CD4-positive, alpha-beta memory T cell (primary cell): ENCODE measurements at regions of chr1 and their contacts with region 1.

Region 1: DNA sequence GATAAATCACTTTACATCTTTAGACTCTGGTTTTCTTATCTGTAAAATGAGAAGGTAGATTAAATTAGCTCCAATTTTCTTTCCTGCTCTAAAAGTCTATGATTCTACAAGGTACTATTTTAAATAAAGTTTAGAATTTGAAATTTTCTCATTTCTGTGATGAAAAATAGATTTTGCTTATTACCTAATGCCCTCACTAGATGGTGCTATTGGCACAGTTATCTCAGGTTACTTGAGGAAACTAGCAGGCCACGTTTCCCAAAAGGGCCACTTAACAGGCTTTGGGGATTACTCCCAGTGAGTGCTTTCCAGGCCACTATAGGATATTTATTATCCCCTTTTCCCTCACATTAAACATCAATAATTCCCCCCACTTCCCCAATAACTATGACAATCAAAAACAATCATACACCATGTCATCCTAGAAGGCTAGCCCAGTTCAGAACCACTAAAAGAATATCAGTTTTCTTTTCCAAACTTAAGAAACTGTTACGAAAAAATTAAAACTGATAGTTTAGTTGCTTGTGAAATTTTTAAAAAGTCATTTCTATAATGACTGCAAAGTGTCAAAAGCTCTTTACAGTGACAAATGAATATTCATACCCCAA is 30.6 kb downstream of the OMA1 start:
- DNase-seq: peak; percentile 33 to 60 (median 55)
- H3K4me3 ChIP-seq: no peak overlapping the region
- H3K4me3 Mint-ChIP-seq: no peak overlapping the region
- H3K27ac ChIP-seq: no peak overlapping the region
- H3K27ac Mint-ChIP-seq: peak overlapping the region; percentile 54 to 92 (median 77)
- H3K4me1 ChIP-seq: peaks cover 4% of the 10 kb centered on the region
- H3K4me1 Mint-ChIP-seq: peaks cover 5 to 13% (median 7%) of the 10 kb centered on the region in 4 donors
- H3K27me3 ChIP-seq: no peaks in the 10 kb centered on the region
- H3K27me3 Mint-ChIP-seq: no peaks in the 10 kb centered on the region

Region 2: GRCh38 chr1:58528518-58528917 is 12.6 kb after region 1 on chr1:
- CTCF ChIA-PET with region 1: interaction called, 17 read pairs
- POLR2A ChIA-PET with region 1: no interaction called
- intact Hi-C with region 1: no loop called
- DNase-seq: no peak
- H3K4me3 ChIP-seq: no peak overlapping the region
- H3K4me3 Mint-ChIP-seq: no peak overlapping the region
- H3K27ac ChIP-seq: no peak overlapping the region
- H3K27ac Mint-ChIP-seq: peak overlapping the region in 1 of 7 donors; percentile 21
- H3K4me1 ChIP-seq: no peaks in the 10 kb centered on the region
- H3K4me1 Mint-ChIP-seq: no peaks in the 10 kb centered on the region
- H3K27me3 ChIP-seq: no peaks in the 10 kb centered on the region
- H3K27me3 Mint-ChIP-seq: no peaks in the 10 kb centered on the region

Region 3: GRCh38 chr1:58539553-58539952 is 23.7 kb after region 1 on chr1:
- CTCF ChIA-PET with region 1: interaction called, 121 read pairs
- POLR2A ChIA-PET with region 1: interaction called, 3 read pairs
- intact Hi-C with region 1: no loop called
- DNase-seq: no peak
- H3K4me3 ChIP-seq: no peak overlapping the region
- H3K4me3 Mint-ChIP-seq: no peak overlapping the region
- H3K27ac ChIP-seq: no peak overlapping the region
- H3K27ac Mint-ChIP-seq: no peak overlapping the region
- H3K4me1 ChIP-seq: no peaks in the 10 kb centered on the region
- H3K4me1 Mint-ChIP-seq: peaks cover 2 to 13% (median 8%) of the 10 kb centered on the region in 4 donors
- H3K27me3 ChIP-seq: no peaks in the 10 kb centered on the region
- H3K27me3 Mint-ChIP-seq: no peaks in the 10 kb centered on the region

Region 4: GRCh38 chr1:58652651-58653184 is 136.8 kb after region 1 on chr1:
- CTCF ChIA-PET with region 1: interaction called, 88 read pairs
- POLR2A ChIA-PET with region 1: interaction called, 3 read pairs
- intact Hi-C with region 1: loop called (anchors 1 kb)
- DNase-seq: peak; percentile 43 to 63 (median 60)
- H3K4me3 ChIP-seq: no peak overlapping the region
- H3K4me3 Mint-ChIP-seq: no peak overlapping the region
- H3K27ac ChIP-seq: no peak overlapping the region
- H3K27ac Mint-ChIP-seq: peak overlapping the region in 1 of 7 donors; percentile 32
- H3K4me1 ChIP-seq: peaks cover 14% of the 10 kb centered on the region
- H3K4me1 Mint-ChIP-seq: peaks cover 11 to 29% (median 15%) of the 10 kb centered on the region in 4 donors
- H3K27me3 ChIP-seq: no peaks in the 10 kb centered on the region
- H3K27me3 Mint-ChIP-seq: no peaks in the 10 kb centered on the region

Region 5: DNA sequence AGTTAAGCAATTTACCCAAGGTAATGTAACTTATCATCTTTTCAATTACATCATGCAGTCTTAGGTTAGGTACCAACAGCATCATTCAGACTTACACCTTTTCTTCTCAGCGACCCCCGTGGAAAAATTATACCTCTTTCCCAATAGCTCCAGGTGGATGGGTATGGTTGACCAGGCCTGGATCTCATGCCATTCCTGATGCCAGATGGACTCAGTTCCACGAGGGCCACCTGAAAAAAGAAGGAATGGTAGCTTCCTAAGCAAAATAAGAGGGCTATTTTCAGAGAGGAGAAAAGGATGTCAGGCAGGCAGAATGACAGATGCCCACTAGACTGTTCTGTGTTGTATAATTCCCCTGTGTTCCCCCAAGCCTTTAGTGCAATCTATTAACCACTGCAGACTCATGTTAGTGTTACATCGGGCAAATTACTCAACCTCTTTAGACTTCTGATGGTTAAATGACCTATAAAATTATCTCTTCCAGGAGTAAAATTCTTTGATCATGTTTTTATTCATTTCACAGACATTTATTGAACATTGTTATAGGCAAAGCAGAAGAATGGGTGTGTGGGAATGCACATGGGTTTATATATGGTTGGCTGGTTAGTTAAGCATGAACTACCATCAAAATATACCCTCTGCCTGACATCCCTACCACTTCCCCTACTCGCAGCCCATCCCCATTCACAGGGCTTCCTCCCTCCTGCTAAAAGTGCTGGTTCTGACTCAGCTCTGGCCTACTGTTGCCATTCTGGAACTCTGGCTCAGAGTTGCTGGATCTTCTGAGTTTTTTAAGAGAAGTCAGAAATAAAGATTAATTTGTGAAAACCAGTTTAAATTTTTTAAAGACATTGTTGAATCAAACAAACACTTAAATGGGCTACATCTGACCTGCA is 194.5 kb after region 1 on chr1:
- CTCF ChIA-PET with region 1: no interaction called
- POLR2A ChIA-PET with region 1: no interaction called
- intact Hi-C with region 1: no loop called
- DNase-seq: no peak
- H3K4me3 ChIP-seq: no peak overlapping the region
- H3K4me3 Mint-ChIP-seq: no peak overlapping the region
- H3K27ac ChIP-seq: no peak overlapping the region
- H3K27ac Mint-ChIP-seq: no peak overlapping the region
- H3K4me1 ChIP-seq: no peaks in the 10 kb centered on the region
- H3K4me1 Mint-ChIP-seq: peaks cover 0 to 10% (median 1%) of the 10 kb centered on the region in 4 donors
- H3K27me3 ChIP-seq: no peaks in the 10 kb centered on the region
- H3K27me3 Mint-ChIP-seq: no peaks in the 10 kb centered on the region

Region 6: DNA sequence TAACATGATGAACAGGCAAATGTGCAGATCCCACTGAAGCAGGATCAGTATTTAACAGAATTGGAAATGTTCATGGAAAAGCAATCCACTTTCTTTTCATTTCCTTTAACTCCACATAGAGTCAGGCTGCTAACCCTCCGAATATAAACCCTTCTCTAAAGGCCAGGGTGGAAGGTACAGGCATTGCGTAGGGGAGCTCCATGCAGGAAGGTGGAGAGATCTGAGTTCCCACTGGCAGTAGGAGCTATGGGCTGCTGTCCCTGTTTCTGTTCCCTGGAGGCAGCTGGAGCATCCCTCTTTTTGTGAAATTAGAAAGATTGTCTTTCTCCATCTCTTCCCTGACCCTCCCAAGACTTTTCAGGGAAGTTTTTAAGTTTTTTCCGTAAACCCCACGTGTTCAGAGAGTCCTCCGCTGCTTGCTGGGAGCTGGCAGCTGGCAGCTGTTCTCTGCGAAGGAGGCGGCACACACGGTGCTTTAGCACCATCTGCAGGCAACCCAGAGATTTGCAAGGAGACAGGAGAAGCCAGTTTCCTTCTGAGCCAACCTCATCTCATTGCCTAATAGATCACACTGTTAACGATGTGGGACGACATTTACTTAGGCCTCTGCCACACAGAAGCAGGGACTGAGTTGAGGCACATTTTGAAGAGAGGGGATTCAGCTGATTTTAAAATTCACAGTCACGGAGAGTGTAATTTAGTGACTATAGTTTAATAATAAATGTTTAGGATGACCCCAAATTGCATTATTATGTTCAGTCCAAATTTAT is 1243.4 kb after region 1 on chr1:
- CTCF ChIA-PET with region 1: interaction called, 20 read pairs
- POLR2A ChIA-PET with region 1: no interaction called
- intact Hi-C with region 1: loop called (anchors 10 kb)
- DNase-seq: peak; percentile 58 to 67 (median 63)
- H3K4me3 ChIP-seq: no peak overlapping the region
- H3K4me3 Mint-ChIP-seq: peak overlapping the region in 3 of 8 donors; percentile 47 to 59 (median 59)
- H3K27ac ChIP-seq: no peak overlapping the region
- H3K27ac Mint-ChIP-seq: peak overlapping the region in 1 of 7 donors; percentile 53
- H3K4me1 ChIP-seq: peaks cover 3% of the 10 kb centered on the region
- H3K4me1 Mint-ChIP-seq: peaks cover 0 to 4% (median 3%) of the 10 kb centered on the region in 4 donors
- H3K27me3 ChIP-seq: no peaks in the 10 kb centered on the region
- H3K27me3 Mint-ChIP-seq: no peaks in the 10 kb centered on the region